ENCODE measurements at regions of chr12 and their contacts with region 1.

Region 1: GRCh38 chr12:14960548-14961465 is 594 bp downstream of the ARHGDIB start:
- DNase-seq: peak; percentile 38 to 75
- ATAC-seq: peak; percentile 56 to 76 (median 60)
- H3K4me3 ChIP-seq: peak overlapping the region; percentile 91
- H3K4me3 Mint-ChIP-seq: peak overlapping the region; percentile 100
- H3K27ac ChIP-seq: peak overlapping the region; percentile 95
- H3K27ac Mint-ChIP-seq: peak overlapping the region; percentile 97 to 98
- H3K4me1 ChIP-seq: peaks cover 41% of the 10 kb centered on the region
- H3K4me1 Mint-ChIP-seq: peaks cover 75 to 76% of the 10 kb centered on the region in 2 donors
- H3K27me3 ChIP-seq: no peaks in the 10 kb centered on the region
- H3K27me3 Mint-ChIP-seq: no peaks in the 10 kb centered on the region
- CTCF ChIP-seq: no peak

Region 2: GRCh38 chr12:14365294-14366208 is 595.3 kb before region 1 on chr12 and contains the start of gene ATF7IP:
- intact Hi-C with region 1: loop called (anchors 5 kb)
- DNase-seq: peak; percentile 97 to 98
- ATAC-seq: peak; percentile 86 to 96 (median 88)
- H3K4me3 ChIP-seq: peak within 1 kb of the TSS; percentile 89
- H3K4me3 Mint-ChIP-seq: peak within 1 kb of the TSS; percentile 97
- H3K27ac ChIP-seq: peak within 1 kb of the TSS; percentile 97
- H3K27ac Mint-ChIP-seq: peak within 1 kb of the TSS; percentile 89 to 100
- H3K4me1 ChIP-seq: peaks cover 17% of the 10 kb centered on the region
- H3K4me1 Mint-ChIP-seq: peaks cover 31 to 43% of the 10 kb centered on the region in 2 donors
- H3K27me3 ChIP-seq: no peaks in the 10 kb centered on the region
- H3K27me3 Mint-ChIP-seq: no peaks in the 10 kb centered on the region
- CTCF ChIP-seq: no peak
- total RNA-seq, gene ATF7IP: 161 to 180 (median 173) TPM

Region 3: DNA sequence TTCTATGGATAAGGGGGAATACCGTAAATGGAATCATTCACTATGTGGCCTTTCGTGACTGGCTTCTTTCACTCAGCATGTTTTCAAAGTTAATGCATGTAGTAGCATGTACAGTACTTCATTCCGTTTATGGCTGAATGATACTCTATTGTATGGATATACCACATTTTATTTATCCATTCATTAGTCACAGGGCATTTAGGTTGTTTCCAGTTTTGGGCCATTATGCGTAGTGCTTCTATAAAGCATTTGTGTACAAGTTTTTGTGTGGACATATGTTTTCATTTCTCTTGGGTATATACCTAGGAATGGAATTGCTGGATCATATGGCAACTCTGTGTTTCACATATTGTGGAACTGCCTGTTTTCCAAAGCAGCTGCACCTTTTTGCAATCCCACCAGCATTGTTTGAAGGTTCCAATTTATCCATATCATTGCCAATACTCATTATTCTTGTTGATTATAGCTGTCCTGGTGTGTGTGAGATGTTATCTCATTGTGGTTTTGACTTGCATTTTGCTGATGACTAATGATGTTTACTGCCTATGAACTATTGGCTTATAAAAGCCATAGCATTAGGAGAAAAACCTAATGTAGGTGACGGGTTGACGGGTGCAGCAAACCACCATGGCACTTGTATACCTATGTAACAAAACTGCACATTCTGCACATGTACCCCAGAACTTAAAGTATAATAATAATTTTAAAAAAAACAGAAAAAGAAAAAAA is 549.8 kb before region 1 on chr12:
- intact Hi-C with region 1: loop called (anchors 5 kb)
- DNase-seq: peak in 1 of 2 donors; percentile 72
- ATAC-seq: peak; percentile 72 to 81 (median 78)
- H3K4me3 ChIP-seq: peak overlapping the region; percentile 10
- H3K4me3 Mint-ChIP-seq: no peak overlapping the region
- H3K27ac ChIP-seq: peak overlapping the region; percentile 56
- H3K27ac Mint-ChIP-seq: peak overlapping the region; percentile 89 to 90
- H3K4me1 ChIP-seq: peaks cover 20% of the 10 kb centered on the region
- H3K4me1 Mint-ChIP-seq: peaks cover 59 to 66% of the 10 kb centered on the region in 2 donors
- H3K27me3 ChIP-seq: no peaks in the 10 kb centered on the region
- H3K27me3 Mint-ChIP-seq: no peaks in the 10 kb centered on the region
- CTCF ChIP-seq: no peak

Region 4: DNA sequence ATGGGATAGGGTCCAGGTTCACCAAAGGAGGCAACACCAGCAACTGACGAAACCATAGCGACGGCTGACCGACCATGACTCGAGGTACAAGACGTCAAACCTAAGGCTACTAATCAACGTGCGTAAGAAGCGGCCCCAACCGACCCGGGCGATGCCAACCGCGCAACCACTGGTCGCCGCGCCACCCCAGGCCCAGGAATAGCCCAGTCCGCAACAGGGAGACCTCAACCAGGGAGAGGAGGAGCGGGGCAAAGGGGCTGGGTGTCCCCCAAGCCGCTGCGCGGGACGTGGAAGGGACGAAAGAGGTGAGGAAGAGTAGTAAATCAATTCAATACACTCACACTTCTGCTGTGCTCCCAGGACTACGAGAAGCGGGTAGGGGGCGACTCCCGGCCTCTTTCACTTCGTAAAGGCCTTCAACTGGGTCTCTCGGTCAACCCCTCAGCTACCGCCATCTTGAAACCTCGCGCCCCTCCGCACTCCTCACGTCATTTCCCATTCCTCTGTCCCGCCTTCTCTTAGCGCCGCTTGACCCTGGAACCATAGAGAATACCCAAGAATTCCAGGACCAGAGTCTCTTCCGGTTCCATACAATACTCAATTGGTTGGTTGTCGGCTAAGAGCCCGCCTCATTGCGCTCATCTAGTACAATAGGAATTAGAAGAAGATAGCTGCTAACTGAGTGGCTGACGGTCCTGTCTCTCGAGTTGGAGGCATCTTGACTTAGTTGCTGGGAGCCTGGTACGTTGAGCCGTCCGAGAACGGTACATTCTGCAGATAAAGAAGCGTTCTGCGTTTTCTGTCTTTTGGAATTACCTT is 157.6 kb before region 1 on chr12 and contains the starts of genes C12orf60 and WBP11:
- intact Hi-C with region 1: loop called (anchors 1 kb)
- DNase-seq: peak; percentile 79 to 96
- ATAC-seq: peak; percentile 88 to 98 (median 94)
- H3K4me3 ChIP-seq: peak within 1 kb of the TSS; percentile 92
- H3K4me3 Mint-ChIP-seq: no peak within 1 kb of the TSS
- H3K27ac ChIP-seq: peak within 1 kb of the TSS; percentile 98
- H3K27ac Mint-ChIP-seq: no peak within 1 kb of the TSS
- H3K4me1 ChIP-seq: peaks cover 10% of the 10 kb centered on the region
- H3K4me1 Mint-ChIP-seq: peaks cover 0 to 15% of the 10 kb centered on the region in 2 donors
- H3K27me3 ChIP-seq: no peaks in the 10 kb centered on the region
- H3K27me3 Mint-ChIP-seq: no peaks in the 10 kb centered on the region
- CTCF ChIP-seq: no peak
- total RNA-seq, gene C12orf60: 0.28 to 0.79 (median 0.33) TPM
- total RNA-seq, gene WBP11: 130 to 159 (median 134) TPM

Region 5: DNA sequence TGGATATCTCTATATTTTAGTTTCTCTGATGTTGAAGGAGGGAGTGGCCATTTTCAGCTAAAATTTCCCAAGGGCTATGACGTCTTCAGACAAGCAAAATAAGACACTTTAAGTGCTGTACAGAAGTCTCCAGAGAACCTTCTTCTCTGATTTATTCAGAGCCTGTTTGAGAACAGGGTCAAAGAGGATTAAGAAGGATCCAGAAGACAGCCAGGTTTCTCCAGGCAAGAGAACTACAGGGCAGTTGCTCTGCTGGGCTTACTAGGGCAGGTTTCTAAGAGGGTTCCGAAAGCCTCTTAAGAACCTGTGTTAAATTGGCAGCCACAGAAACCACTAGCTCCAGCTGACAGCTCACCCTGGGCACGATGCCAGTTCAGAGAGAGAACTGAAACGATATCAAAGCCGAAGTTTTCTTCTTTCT is 76.3 kb before region 1 on chr12:
- intact Hi-C with region 1: loop called (anchors 5 kb)
- DNase-seq: peak; percentile 67 to 95
- ATAC-seq: peak; percentile 91 to 98 (median 92)
- H3K4me3 ChIP-seq: no peak overlapping the region
- H3K4me3 Mint-ChIP-seq: peak overlapping the region; percentile 62
- H3K27ac ChIP-seq: no peak overlapping the region
- H3K27ac Mint-ChIP-seq: peak overlapping the region; percentile 61 to 88
- H3K4me1 ChIP-seq: peaks cover 8% of the 10 kb centered on the region
- H3K4me1 Mint-ChIP-seq: peaks cover 23 to 31% of the 10 kb centered on the region in 2 donors
- H3K27me3 ChIP-seq: peaks cover 8% of the 10 kb centered on the region
- H3K27me3 Mint-ChIP-seq: peaks cover 36 to 63% of the 10 kb centered on the region in 2 donors
- CTCF ChIP-seq: no peak

Region 6: DNA sequence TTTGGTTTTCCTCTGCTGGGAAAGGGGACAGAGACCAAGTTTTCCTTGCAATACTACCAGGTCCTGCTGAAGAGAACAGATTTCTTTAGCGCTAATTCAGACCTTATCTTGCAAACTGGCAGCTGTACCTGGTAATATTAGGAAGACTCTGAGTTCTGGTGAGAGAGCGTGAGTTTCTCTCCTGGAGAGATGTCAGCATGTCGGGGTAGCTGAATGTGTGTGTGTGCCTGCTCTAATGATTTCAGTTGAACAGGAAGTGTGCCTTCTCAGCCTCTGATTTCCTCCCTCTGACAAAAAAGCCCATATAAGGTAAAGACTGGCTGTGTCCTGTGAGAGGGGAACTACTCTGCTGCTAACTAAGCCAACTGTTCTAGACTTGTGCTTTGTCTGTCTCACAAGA is 12.1 kb before region 1 on chr12:
- intact Hi-C with region 1: loop called (anchors 1 kb)
- DNase-seq: peak in 1 of 2 donors; percentile 89
- ATAC-seq: peak; percentile 77 to 93 (median 87)
- H3K4me3 ChIP-seq: no peak overlapping the region
- H3K4me3 Mint-ChIP-seq: peak overlapping the region; percentile 80
- H3K27ac ChIP-seq: peak overlapping the region; percentile 81
- H3K27ac Mint-ChIP-seq: peak overlapping the region; percentile 94 to 95
- H3K4me1 ChIP-seq: peaks cover 41% of the 10 kb centered on the region
- H3K4me1 Mint-ChIP-seq: peaks cover 86 to 91% of the 10 kb centered on the region in 2 donors
- H3K27me3 ChIP-seq: no peaks in the 10 kb centered on the region
- H3K27me3 Mint-ChIP-seq: no peaks in the 10 kb centered on the region
- CTCF ChIP-seq: no peak

Region 7: GRCh38 chr12:15131431-15131830 is 170.6 kb after region 1 on chr12:
- intact Hi-C with region 1: no loop called
- DNase-seq: no peak
- ATAC-seq: no peak
- H3K4me3 ChIP-seq: no peak overlapping the region
- H3K4me3 Mint-ChIP-seq: no peak overlapping the region
- H3K27ac ChIP-seq: no peak overlapping the region
- H3K27ac Mint-ChIP-seq: no peak overlapping the region
- H3K4me1 ChIP-seq: no peaks in the 10 kb centered on the region
- H3K4me1 Mint-ChIP-seq: no peaks in the 10 kb centered on the region
- H3K27me3 ChIP-seq: no peaks in the 10 kb centered on the region
- H3K27me3 Mint-ChIP-seq: peaks cover 5 to 13% of the 10 kb centered on the region in 2 donors
- CTCF ChIP-seq: no peak

Region 8: DNA sequence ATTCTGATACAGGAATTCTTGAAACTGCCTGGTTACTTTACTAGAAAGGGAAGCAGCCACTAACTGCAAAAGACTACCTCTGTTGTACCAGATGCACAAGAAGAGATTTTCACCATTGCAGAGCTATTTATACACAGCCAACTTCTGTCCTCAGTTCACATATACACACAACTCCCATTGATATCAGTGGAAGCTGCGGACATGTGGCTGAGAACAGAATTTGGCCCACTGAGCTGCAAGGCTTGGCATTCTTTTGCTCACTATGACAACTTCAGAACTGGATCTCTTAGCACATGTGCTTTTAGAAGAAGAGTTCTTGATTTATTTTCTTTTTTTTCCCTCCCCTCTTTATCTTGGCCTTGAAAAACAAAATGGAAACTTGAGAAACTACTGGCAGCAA is 389.8 kb after region 1 on chr12:
- intact Hi-C with region 1: no loop called
- DNase-seq: no peak
- ATAC-seq: no peak
- H3K4me3 ChIP-seq: no peak overlapping the region
- H3K4me3 Mint-ChIP-seq: no peak overlapping the region
- H3K27ac ChIP-seq: no peak overlapping the region
- H3K27ac Mint-ChIP-seq: no peak overlapping the region
- H3K4me1 ChIP-seq: no peaks in the 10 kb centered on the region
- H3K4me1 Mint-ChIP-seq: no peaks in the 10 kb centered on the region
- H3K27me3 ChIP-seq: no peaks in the 10 kb centered on the region
- H3K27me3 Mint-ChIP-seq: peaks cover 0 to 13% of the 10 kb centered on the region in 2 donors
- CTCF ChIP-seq: no peak

Measured in natural killer cell (primary cell).